ENCODE measurements at regions of chr1 and their contacts with region 1.

Region 1: GRCh38 chr1:247936415-247936814 is 11.7 kb downstream of the OR2AJ1 start:
- DNase-seq: no peak
- H3K4me3 Mint-ChIP-seq: no peak overlapping the region
- H3K27ac Mint-ChIP-seq: no peak overlapping the region
- H3K4me1 Mint-ChIP-seq: no peaks in the 10 kb centered on the region
- H3K27me3 Mint-ChIP-seq: peaks cover 4% of the 10 kb centered on the region

Region 2: GRCh38 chr1:247906504-247907047 is 29.8 kb before region 1 on chr1:
- intact Hi-C with region 1: loop called (anchors 1 kb)
- DNase-seq: no peak
- H3K4me3 Mint-ChIP-seq: peak overlapping the region; percentile 81
- H3K27ac Mint-ChIP-seq: peak overlapping the region; percentile 71
- H3K4me1 Mint-ChIP-seq: peaks cover 33% of the 10 kb centered on the region
- H3K27me3 Mint-ChIP-seq: peaks cover 2% of the 10 kb centered on the region

Region 3: DNA sequence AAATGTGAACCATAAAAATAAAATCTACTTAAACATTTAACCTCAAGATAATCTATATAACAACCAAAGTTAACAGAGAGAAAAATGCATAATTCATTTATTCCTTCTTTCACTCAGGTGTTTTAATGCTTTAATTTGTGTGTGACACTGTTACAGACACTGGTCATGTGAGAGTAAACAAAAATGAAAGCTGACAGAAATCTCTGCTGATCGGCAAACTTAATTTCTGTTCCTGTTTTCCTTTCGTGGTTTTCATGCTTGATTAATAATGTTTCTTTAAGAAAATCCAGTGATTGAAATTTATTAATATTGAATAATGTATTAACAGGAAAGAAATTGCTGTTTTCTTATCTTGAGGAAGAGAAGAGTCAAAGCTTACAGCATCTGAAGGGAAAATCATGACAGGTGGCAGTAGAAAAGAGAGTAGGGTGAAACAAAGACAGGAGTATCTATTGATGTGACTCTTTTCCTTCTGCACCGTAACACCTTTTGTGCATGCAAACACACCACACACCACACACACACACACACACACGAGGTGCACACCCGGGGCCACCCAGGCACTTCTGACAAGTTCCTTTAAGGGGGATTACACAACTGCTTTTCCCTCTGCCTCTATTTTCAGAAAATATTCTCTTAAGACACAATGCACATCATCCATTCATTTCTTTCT is 30.3 kb after region 1 on chr1:
- intact Hi-C with region 1: no loop called
- DNase-seq: no peak
- H3K4me3 Mint-ChIP-seq: no peak overlapping the region
- H3K27ac Mint-ChIP-seq: no peak overlapping the region
- H3K4me1 Mint-ChIP-seq: no peaks in the 10 kb centered on the region
- H3K27me3 Mint-ChIP-seq: no peaks in the 10 kb centered on the region

Region 4: DNA sequence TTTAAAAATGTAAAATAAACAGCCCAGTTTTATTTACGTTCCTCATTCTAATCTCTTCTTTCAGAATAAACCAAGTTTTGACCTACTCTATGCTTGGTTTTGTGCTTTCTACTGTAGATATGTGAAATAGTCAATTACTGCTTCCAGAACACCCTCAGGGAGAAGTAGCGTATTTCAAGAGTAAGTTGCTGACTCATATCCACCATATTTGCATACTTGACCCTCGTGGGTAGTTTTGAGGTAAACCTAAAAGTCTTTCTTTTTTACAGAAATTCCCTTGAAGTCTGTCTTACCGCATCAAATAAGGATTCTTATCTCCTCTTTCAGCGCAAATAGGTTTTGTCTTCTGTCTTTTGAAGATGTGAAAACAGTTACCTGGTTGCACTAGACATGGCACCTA is 108.8 kb after region 1 on chr1:
- intact Hi-C with region 1: no loop called
- DNase-seq: no peak
- H3K4me3 Mint-ChIP-seq: no peak overlapping the region
- H3K27ac Mint-ChIP-seq: no peak overlapping the region
- H3K4me1 Mint-ChIP-seq: no peaks in the 10 kb centered on the region
- H3K27me3 Mint-ChIP-seq: no peaks in the 10 kb centered on the region

Region 5: DNA sequence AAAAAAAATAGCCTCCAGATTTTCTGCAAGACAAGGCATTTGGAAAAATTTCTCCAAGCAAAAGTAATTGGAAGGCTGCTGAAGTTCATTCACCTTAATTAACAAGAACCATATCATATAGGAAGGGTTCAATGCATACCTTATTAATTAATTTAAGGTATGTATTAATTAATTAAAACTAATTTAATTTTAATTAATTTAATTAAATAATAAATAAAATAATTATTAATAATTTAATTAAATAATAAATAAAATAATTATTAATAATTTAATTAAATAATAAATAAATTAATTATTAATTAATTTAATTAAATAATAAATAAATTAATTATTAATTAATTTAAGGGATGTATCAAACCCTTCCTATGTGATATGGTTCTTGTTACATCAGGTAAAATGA is 166.4 kb after region 1 on chr1:
- intact Hi-C with region 1: loop called (anchors 2 kb)
- DNase-seq: no peak
- H3K4me3 Mint-ChIP-seq: no peak overlapping the region
- H3K27ac Mint-ChIP-seq: no peak overlapping the region
- H3K4me1 Mint-ChIP-seq: no peaks in the 10 kb centered on the region
- H3K27me3 Mint-ChIP-seq: no peaks in the 10 kb centered on the region

Region 6: GRCh38 chr1:248243204-248243603 is 306.8 kb after region 1 on chr1:
- intact Hi-C with region 1: loop called (anchors 5 kb)
- DNase-seq: no peak
- H3K4me3 Mint-ChIP-seq: no peak overlapping the region
- H3K27ac Mint-ChIP-seq: no peak overlapping the region
- H3K4me1 Mint-ChIP-seq: peaks cover 7% of the 10 kb centered on the region
- H3K27me3 Mint-ChIP-seq: no peaks in the 10 kb centered on the region